ENCODE measurements at regions of chr2 and their contacts with region 1.

Region 1: GRCh38 chr2:229501051-229501794 is 213.1 kb downstream of the DNER start:
- DNase-seq: no peak
- H3K4me3 ChIP-seq: no peak overlapping the region
- H3K27ac ChIP-seq: no peak overlapping the region
- H3K4me1 ChIP-seq: no peaks in the 10 kb centered on the region
- H3K27me3 ChIP-seq: no peaks in the 10 kb centered on the region
- CTCF ChIP-seq: no peak
- POLR2A ChIP-seq: no peak

Region 2: GRCh38 chr2:228956701-228957474 is 544.3 kb before region 1 on chr2:
- intact Hi-C with region 1: no loop called
- DNase-seq: no peak
- H3K4me3 ChIP-seq: no peak overlapping the region
- H3K27ac ChIP-seq: no peak overlapping the region
- H3K4me1 ChIP-seq: no peaks in the 10 kb centered on the region
- H3K27me3 ChIP-seq: no peaks in the 10 kb centered on the region
- CTCF ChIP-seq: no peak
- POLR2A ChIP-seq: no peak

Region 3: DNA sequence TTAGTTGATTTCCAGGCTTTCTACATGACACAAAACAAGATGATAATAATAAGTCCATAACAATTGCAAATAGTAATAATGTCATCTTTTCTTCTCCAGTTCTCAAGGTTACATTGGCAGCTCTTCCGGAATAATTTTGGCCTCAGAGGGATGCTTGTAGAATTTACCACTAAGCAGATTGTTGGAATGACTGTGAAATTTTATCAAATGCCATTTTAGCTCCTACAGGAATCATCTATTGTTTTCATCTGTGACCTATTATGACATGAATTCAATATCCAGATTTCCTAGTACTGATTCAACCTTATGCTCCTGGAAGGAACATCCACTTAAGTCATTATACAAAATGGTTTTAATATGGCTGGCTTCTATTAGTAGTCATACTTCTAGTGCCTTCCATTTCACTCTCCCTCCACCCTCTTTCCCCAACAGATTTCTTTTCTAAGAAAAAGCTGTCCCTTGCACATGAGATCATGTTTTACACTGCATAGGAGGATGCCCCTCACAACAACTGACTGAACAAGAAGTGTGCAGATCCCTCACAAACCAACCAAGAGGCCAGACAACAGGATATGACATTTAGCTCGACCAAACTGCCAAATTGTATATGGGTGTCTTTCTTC is 13.2 kb after region 1 on chr2:
- intact Hi-C with region 1: loop called (anchors 1 kb)
- DNase-seq: no peak
- H3K4me3 ChIP-seq: no peak overlapping the region
- H3K27ac ChIP-seq: no peak overlapping the region
- H3K4me1 ChIP-seq: no peaks in the 10 kb centered on the region
- H3K27me3 ChIP-seq: no peaks in the 10 kb centered on the region
- CTCF ChIP-seq: no peak
- POLR2A ChIP-seq: no peak

Region 4: DNA sequence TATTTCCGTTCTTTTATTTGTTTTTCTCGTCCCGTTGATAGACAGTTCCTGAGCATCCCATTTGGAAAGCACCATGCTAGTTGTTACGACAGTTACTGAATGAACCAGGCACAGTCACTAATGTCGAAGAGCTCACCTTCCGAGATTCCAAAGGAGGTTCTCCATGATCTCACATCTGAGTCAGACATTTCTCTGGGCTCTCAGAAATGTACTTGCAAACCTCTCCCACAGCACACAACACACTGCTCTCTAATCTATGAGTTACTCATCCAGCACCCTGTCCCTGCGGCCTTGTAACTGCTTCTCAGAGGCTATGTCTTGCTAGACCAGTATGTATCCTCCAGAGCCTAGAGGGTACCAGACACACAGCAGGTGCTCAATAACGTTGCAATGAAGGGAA is 38.4 kb after region 1 on chr2:
- intact Hi-C with region 1: no loop called
- DNase-seq: no peak
- H3K4me3 ChIP-seq: no peak overlapping the region
- H3K27ac ChIP-seq: no peak overlapping the region
- H3K4me1 ChIP-seq: no peaks in the 10 kb centered on the region
- H3K27me3 ChIP-seq: no peaks in the 10 kb centered on the region
- CTCF ChIP-seq: no peak
- POLR2A ChIP-seq: no peak